ENCODE measurements at regions of chrX and their contacts with region 1.

Region 1: GRCh38 chrX:5876984-5877596 is 351.6 kb downstream of the NLGN4X start:
- DNase-seq: no peak
- ATAC-seq: no peak
- H3K4me3 Mint-ChIP-seq: no peak overlapping the region
- H3K27ac Mint-ChIP-seq: no peak overlapping the region
- H3K4me1 Mint-ChIP-seq: no peaks in the 10 kb centered on the region
- H3K27me3 Mint-ChIP-seq: no peaks in the 10 kb centered on the region
- CTCF ChIP-seq: no peak

Region 2: GRCh38 chrX:5458300-5458842 is 418.7 kb before region 1 on chrX:
- CTCF ChIA-PET with region 1: no interaction called
- POLR2A ChIA-PET with region 1: no interaction called
- intact Hi-C with region 1: loop called (anchors 5 kb)
- DNase-seq: no peak
- ATAC-seq: no peak
- H3K4me3 Mint-ChIP-seq: no peak overlapping the region
- H3K27ac Mint-ChIP-seq: no peak overlapping the region
- H3K4me1 Mint-ChIP-seq: no peaks in the 10 kb centered on the region
- H3K27me3 Mint-ChIP-seq: no peaks in the 10 kb centered on the region
- CTCF ChIP-seq: no peak

Region 3: DNA sequence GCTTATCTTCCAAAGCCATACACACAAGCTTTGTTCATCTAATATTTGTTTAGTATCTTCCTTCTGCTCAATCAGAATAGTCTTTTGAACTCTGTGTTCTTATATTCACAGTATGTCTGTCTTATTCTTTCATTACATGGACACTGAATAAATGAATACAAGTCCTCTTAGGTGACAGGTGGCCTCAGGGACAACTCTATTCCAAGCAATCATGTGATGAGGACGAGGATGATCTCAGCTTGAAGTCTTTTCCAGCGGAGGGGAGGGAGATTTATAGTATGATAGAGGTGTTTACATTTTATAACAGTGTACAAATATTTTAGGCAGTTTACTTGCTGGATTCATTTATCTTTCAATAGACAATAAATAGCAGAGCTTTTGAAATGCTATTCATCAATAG is 51.1 kb after region 1 on chrX:
- CTCF ChIA-PET with region 1: no interaction called
- POLR2A ChIA-PET with region 1: no interaction called
- intact Hi-C with region 1: no loop called
- DNase-seq: no peak
- ATAC-seq: no peak
- H3K4me3 Mint-ChIP-seq: no peak overlapping the region
- H3K27ac Mint-ChIP-seq: no peak overlapping the region
- H3K4me1 Mint-ChIP-seq: no peaks in the 10 kb centered on the region
- H3K27me3 Mint-ChIP-seq: no peaks in the 10 kb centered on the region
- CTCF ChIP-seq: no peak